Heart right ventricle (tissue), 16 donors: ENCODE measurements at regions of chr10 and their contacts with region 1.

Region 1: GRCh38 chr10:100046021-100046486 is 35.6 kb downstream of the CPN1 start:
- DNase-seq: peak; percentile 90
- ATAC-seq: peak; percentile 74 to 90 (median 80)
- H3K4me3 ChIP-seq: no peak overlapping the region
- H3K27ac ChIP-seq: peak overlapping the region in 6 of 10 donors; percentile 2 to 80 (median 30)
- H3K4me1 ChIP-seq: peaks cover 0 to 36% (median 29%) of the 10 kb centered on the region in 9 donors
- H3K27me3 ChIP-seq: no peaks in the 10 kb centered on the region
- CTCF ChIP-seq: peak; percentile 90 to 98 (median 96)

Region 2: GRCh38 chr10:99845837-99846382 is 200.1 kb before region 1 on chr10:
- intact Hi-C with region 1: loop called (anchors 1 to 5 kb)
- DNase-seq: peak; percentile 34 to 82
- ATAC-seq: peak; percentile 85 to 97 (median 94)
- H3K4me3 ChIP-seq: peak overlapping the region; percentile 4 to 51 (median 35)
- H3K27ac ChIP-seq: no peak overlapping the region
- H3K4me1 ChIP-seq: peaks cover 0 to 12% (median 6%) of the 10 kb centered on the region in 9 donors
- H3K27me3 ChIP-seq: no peaks in the 10 kb centered on the region
- CTCF ChIP-seq: peak; percentile 89 to 95 (median 90)

Region 3: GRCh38 chr10:99854860-99855259 is 191.2 kb before region 1 on chr10:
- intact Hi-C with region 1: loop called in 2 of 10 experiments (anchors 2 kb)
- DNase-seq: peak in 1 of 2 donors; percentile 38
- ATAC-seq: peak in 6 of 8 donors; percentile 46 to 75 (median 66)
- H3K4me3 ChIP-seq: no peak overlapping the region
- H3K27ac ChIP-seq: no peak overlapping the region
- H3K4me1 ChIP-seq: no peaks in the 10 kb centered on the region
- H3K27me3 ChIP-seq: no peaks in the 10 kb centered on the region
- CTCF ChIP-seq: peak in 7 of 9 donors; percentile 43 to 67 (median 57)

Region 4: GRCh38 chr10:99976886-99977665 is 69.0 kb before region 1 on chr10:
- intact Hi-C with region 1: loop called in 3 of 10 experiments (anchors 5 to 10 kb)
- DNase-seq: no peak
- ATAC-seq: peak; percentile 46 to 93 (median 83)
- H3K4me3 ChIP-seq: peak overlapping the region in 1 of 10 donors; percentile 4
- H3K27ac ChIP-seq: peak overlapping the region; percentile 21 to 80 (median 68)
- H3K4me1 ChIP-seq: peaks cover 0 to 67% (median 51%) of the 10 kb centered on the region in 9 donors
- H3K27me3 ChIP-seq: no peaks in the 10 kb centered on the region
- CTCF ChIP-seq: no peak